Ascending aorta (tissue), 2 donors: ENCODE measurements at regions of chr7 and their contacts with region 1.

Region 1: GRCh38 chr7:135509903-135510602 is at the start of gene CNOT4:
- DNase-seq: peak; percentile 91 to 98
- H3K4me3 ChIP-seq: peak within 1 kb of the TSS; percentile 66 to 83
- H3K27ac ChIP-seq: peak within 1 kb of the TSS; percentile 86 to 95
- H3K4me1 ChIP-seq: peaks cover 0 to 23% of the 10 kb centered on the region in 2 donors
- H3K27me3 ChIP-seq: no peaks in the 10 kb centered on the region
- CTCF ChIP-seq: no peak
- total RNA-seq, gene CNOT4: 14.8 TPM

Region 2: GRCh38 chr7:134458806-134459698 is 1051.0 kb before region 1 on chr7 and contains the start of gene AKR1B1:
- intact Hi-C with region 1: loop called (anchors 10 kb)
- DNase-seq: peak; percentile 66 to 97
- H3K4me3 ChIP-seq: peak within 1 kb of the TSS; percentile 77 to 79
- H3K27ac ChIP-seq: peak within 1 kb of the TSS; percentile 83 to 91
- H3K4me1 ChIP-seq: peaks cover 2 to 11% of the 10 kb centered on the region in 2 donors
- H3K27me3 ChIP-seq: no peaks in the 10 kb centered on the region
- CTCF ChIP-seq: peak; percentile 49 to 75 (median 52)
- total RNA-seq, gene AKR1B1: 78.7 TPM

Region 3: DNA sequence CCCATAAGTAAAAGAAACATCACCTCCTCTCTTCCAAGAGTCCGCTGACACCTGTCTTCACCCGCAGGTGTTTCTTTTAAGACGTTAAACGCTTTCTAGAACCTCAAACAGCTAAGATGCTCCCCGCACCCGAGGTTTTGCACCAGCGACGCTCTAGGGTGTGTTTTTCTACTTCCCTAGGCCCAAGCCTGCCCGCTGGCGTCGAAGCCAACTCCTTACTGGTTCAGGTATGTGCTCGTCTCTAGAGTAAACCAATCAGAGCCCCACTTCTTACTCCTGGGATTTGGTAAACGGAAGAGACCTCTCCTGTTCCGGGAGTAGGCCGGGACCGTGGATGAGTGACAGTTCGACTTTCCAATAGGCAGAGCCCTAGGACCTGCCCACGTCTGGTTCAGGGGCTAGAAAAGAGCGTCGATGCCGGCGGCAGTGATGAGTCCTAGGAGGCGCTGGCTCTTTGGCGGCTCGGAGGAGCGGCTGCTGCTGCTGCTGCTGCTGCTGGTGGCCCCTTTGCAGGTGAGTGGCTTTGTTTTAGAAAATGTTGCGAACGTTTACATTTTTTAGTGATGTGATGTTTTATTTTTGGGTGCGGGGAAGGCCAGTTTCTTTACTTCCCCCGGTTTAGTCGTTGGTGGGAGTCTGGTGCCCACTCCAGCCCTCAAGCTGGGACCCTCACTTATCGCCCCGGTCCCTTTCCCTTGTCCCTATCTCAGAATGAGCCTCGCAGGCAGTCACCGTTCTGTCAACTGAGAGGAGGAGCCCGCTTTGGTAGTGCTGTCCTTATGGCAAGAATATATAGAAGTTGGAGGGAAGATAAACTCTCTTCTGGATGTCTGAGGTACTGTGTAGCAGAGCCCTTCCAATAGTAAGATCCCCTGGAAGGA is 863.4 kb before region 1 on chr7 and contains the start of gene BPGM:
- intact Hi-C with region 1: loop called (anchors 1 kb)
- DNase-seq: peak; percentile 96 to 99
- H3K4me3 ChIP-seq: peak within 1 kb of the TSS; percentile 73 to 81
- H3K27ac ChIP-seq: peak within 1 kb of the TSS; percentile 74 to 84
- H3K4me1 ChIP-seq: peaks cover 2 to 6% of the 10 kb centered on the region in 2 donors
- H3K27me3 ChIP-seq: no peaks in the 10 kb centered on the region
- CTCF ChIP-seq: no peak
- total RNA-seq, gene BPGM: 19.2 TPM

Region 4: GRCh38 chr7:135558337-135558767 is 48.3 kb after region 1 on chr7:
- intact Hi-C with region 1: loop called (anchors 1 kb)
- DNase-seq: peak in 1 of 2 donors; percentile 76
- H3K4me3 ChIP-seq: peak overlapping the region; percentile 65 to 91
- H3K27ac ChIP-seq: peak overlapping the region; percentile 90 to 91
- H3K4me1 ChIP-seq: peaks cover 0 to 7% of the 10 kb centered on the region in 2 donors
- H3K27me3 ChIP-seq: no peaks in the 10 kb centered on the region
- CTCF ChIP-seq: peak; percentile 36 to 57 (median 45)

Region 5: GRCh38 chr7:135977007-135977741 is 467.1 kb after region 1 on chr7 and contains the start of gene MTPN:
- intact Hi-C with region 1: loop called (anchors 5 kb)
- DNase-seq: peak; percentile 98 to 100
- H3K4me3 ChIP-seq: peak within 1 kb of the TSS; percentile 85
- H3K27ac ChIP-seq: peak within 1 kb of the TSS; percentile 81 to 84
- H3K4me1 ChIP-seq: peaks cover 0 to 23% of the 10 kb centered on the region in 2 donors
- H3K27me3 ChIP-seq: no peaks in the 10 kb centered on the region
- CTCF ChIP-seq: no peak
- total RNA-seq, gene MTPN: 43.5 TPM